ENCODE measurements at regions of chr14 and their contacts with region 1.

Region 1: GRCh38 chr14:64303471-64303917 is 9.3 kb upstream of the ESR2 start:
- DNase-seq: no peak
- ATAC-seq: peak; percentile 77 to 92
- H3K4me3 ChIP-seq: no peak overlapping the region
- H3K27ac ChIP-seq: no peak overlapping the region
- H3K4me1 ChIP-seq: no peaks in the 10 kb centered on the region
- H3K27me3 ChIP-seq: no peaks in the 10 kb centered on the region
- CTCF ChIP-seq: peak; percentile 63 to 86 (median 79)
- POLR2A ChIP-seq: no peak

Region 2: DNA sequence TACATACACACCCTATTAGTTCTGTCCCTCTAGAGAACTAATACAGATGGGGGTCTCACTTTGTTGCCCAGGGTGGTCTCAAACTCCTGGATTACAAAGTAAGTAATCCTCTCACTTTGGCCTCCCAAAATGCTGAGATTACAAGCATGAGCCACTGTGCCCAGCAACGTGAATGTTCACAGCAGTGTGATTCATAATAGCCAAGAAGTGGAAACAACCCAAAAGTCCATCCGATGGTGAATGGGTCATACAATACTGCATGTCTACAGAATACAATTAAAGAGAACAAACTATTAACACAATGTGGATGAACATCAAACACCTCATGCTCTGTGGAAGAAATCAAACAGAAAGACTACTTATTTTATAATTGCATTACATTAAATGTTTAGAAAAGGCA is 508.0 kb before region 1 on chr14:
- in situ Hi-C with region 1: loop called (anchors 10 to 25 kb)
- intact Hi-C with region 1: loop called (anchors 2 kb)
- DNase-seq: no peak
- ATAC-seq: no peak
- H3K4me3 ChIP-seq: no peak overlapping the region
- H3K27ac ChIP-seq: no peak overlapping the region
- H3K4me1 ChIP-seq: peaks cover 0 to 8% of the 10 kb centered on the region in 2 donors
- H3K27me3 ChIP-seq: no peaks in the 10 kb centered on the region
- CTCF ChIP-seq: no peak
- POLR2A ChIP-seq: no peak

Region 3: GRCh38 chr14:63800651-63801375 is 502.7 kb before region 1 on chr14:
- in situ Hi-C with region 1: loop called (anchors 10 to 25 kb)
- intact Hi-C with region 1: loop called (anchors 2 kb)
- DNase-seq: no peak
- ATAC-seq: no peak
- H3K4me3 ChIP-seq: no peak overlapping the region
- H3K27ac ChIP-seq: no peak overlapping the region
- H3K4me1 ChIP-seq: peaks cover 0 to 8% of the 10 kb centered on the region in 2 donors
- H3K27me3 ChIP-seq: no peaks in the 10 kb centered on the region
- CTCF ChIP-seq: no peak
- POLR2A ChIP-seq: no peak

Region 4: DNA sequence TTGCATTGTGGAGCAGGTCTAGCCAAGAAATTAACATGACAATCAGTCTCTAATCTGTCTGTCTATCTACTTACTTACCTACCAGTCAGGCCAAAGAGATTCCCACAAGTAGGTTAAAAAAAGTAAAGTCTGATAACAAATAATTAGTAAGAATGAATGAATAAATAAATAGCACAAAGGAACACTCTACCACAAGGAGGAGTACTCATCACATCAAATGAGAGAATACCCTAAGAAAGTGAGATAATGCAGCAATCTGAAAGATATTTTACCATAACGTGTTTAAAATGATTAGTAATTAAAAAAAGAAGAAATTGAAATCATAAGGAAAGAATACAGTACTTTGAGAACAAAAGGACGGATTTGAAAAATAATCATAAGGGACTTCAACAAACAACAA is 263.4 kb before region 1 on chr14:
- in situ Hi-C with region 1: loop called in 3 of 4 experiments (anchors 25 kb)
- intact Hi-C with region 1: no loop called
- DNase-seq: no peak
- ATAC-seq: no peak
- H3K4me3 ChIP-seq: no peak overlapping the region
- H3K27ac ChIP-seq: no peak overlapping the region
- H3K4me1 ChIP-seq: no peaks in the 10 kb centered on the region
- H3K27me3 ChIP-seq: no peaks in the 10 kb centered on the region
- CTCF ChIP-seq: peak in 2 of 5 experiments; percentile 22
- POLR2A ChIP-seq: no peak

Region 5: DNA sequence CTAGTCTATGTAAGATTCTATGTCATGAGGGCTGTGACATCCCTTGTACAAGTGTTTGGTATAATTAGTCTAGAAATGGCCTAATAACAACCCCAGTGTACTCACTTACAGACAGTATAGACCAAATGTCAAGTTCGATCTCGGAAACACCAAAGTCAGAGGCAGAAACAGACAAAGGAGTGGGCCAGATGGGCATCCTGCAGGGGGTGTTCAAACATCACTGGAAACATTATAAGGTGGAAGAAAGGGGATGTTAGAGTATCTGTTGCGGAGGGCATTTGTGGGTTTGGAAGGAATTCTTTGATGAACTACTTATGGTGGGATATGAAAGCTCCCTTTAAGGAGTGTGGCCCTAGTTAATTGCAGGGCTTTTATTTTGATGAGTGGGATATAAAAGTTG is 143.9 kb before region 1 on chr14:
- in situ Hi-C with region 1: loop called in 3 of 4 experiments (anchors 10 to 25 kb)
- intact Hi-C with region 1: no loop called
- DNase-seq: no peak
- ATAC-seq: peak in 1 of 2 donors; percentile 36
- H3K4me3 ChIP-seq: no peak overlapping the region
- H3K27ac ChIP-seq: no peak overlapping the region
- H3K4me1 ChIP-seq: no peaks in the 10 kb centered on the region
- H3K27me3 ChIP-seq: no peaks in the 10 kb centered on the region
- CTCF ChIP-seq: peak in 1 of 5 experiments; percentile 21
- POLR2A ChIP-seq: no peak

Measured in gastrocnemius medialis (tissue), 4 donors.